ENCODE measurements at regions of chr7 and their contacts with region 1.

Region 1: GRCh38 chr7:109844362-109844761 is 1246.6 kb upstream of the LRRN3 start:
- DNase-seq: peak; percentile 35
- ATAC-seq: no peak
- H3K4me3 ChIP-seq: no peak overlapping the region
- H3K27ac ChIP-seq: no peak overlapping the region
- H3K4me1 ChIP-seq: no peaks in the 10 kb centered on the region
- H3K27me3 ChIP-seq: no peaks in the 10 kb centered on the region
- CTCF ChIP-seq: peak; percentile 56 to 62 (median 62); a peak in 5 of 6 replicates
- POLR2A ChIP-seq: no peak
- RAD21 ChIP-seq: peak; percentile 80

Region 2: GRCh38 chr7:108613112-108613759 is 1231.1 kb before region 1 on chr7:
- CTCF ChIA-PET with region 1: no interaction called
- POLR2A ChIA-PET with region 1: no interaction called
- RAD21 ChIA-PET with region 1: no interaction called
- intact Hi-C with region 1: loop called (anchors 5 kb)
- DNase-seq: peak; percentile 33
- ATAC-seq: peak; percentile 77
- H3K4me3 ChIP-seq: no peak overlapping the region
- H3K27ac ChIP-seq: no peak overlapping the region
- H3K4me1 ChIP-seq: no peaks in the 10 kb centered on the region
- H3K27me3 ChIP-seq: no peaks in the 10 kb centered on the region
- CTCF ChIP-seq: peak; percentile 49 to 78 (median 52)
- POLR2A ChIP-seq: no peak
- RAD21 ChIP-seq: peak; percentile 76

Region 3: DNA sequence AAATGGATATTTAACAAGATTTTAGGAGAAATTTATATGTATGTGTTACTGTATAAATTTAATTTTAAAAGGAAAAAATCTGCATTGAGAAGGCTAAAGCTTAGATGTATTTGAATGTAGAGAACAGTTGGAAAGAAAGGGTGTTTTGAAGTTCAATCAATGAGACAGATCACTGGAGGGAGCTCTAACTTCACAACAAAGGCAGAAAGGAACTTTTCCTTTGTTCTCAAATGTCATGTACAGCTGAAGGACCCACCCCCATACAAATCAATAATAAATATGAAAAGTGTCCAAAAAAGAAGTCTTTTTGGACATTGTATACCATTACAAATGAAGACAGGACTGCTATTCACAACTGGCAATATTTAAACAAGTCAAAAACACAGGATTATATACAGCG is 871.3 kb before region 1 on chr7:
- CTCF ChIA-PET with region 1: no interaction called
- POLR2A ChIA-PET with region 1: no interaction called
- RAD21 ChIA-PET with region 1: no interaction called
- intact Hi-C with region 1: loop called (anchors 5 kb)
- DNase-seq: peak; percentile 28
- ATAC-seq: peak; percentile 71
- H3K4me3 ChIP-seq: no peak overlapping the region
- H3K27ac ChIP-seq: no peak overlapping the region
- H3K4me1 ChIP-seq: no peaks in the 10 kb centered on the region
- H3K27me3 ChIP-seq: no peaks in the 10 kb centered on the region
- CTCF ChIP-seq: peak; percentile 30 to 38 (median 33); a peak in 5 of 6 replicates
- POLR2A ChIP-seq: no peak
- RAD21 ChIP-seq: peak; percentile 73

Region 4: DNA sequence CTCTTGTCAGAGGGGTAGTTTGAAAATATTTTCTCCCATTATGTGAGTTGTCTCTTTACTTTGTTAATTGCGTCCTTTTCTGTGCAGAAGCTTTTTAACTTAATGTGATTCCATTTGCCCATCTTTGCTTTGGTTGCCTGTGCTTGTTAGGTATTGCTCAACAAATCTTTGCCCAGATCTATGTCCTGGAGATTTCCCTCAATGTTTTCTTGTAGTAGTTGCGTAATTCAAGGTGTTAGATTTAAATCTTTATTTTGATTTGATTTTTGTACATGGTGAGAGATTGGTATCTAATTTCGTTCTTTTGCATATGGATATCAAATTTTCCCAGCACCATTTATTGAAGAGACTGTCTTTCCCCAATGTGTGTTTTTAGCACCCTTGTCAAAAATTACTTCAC is 707.5 kb before region 1 on chr7:
- CTCF ChIA-PET with region 1: no interaction called
- POLR2A ChIA-PET with region 1: no interaction called
- RAD21 ChIA-PET with region 1: no interaction called
- intact Hi-C with region 1: no loop called
- DNase-seq: no peak
- ATAC-seq: no peak
- H3K4me3 ChIP-seq: no peak overlapping the region
- H3K27ac ChIP-seq: no peak overlapping the region
- H3K4me1 ChIP-seq: no peaks in the 10 kb centered on the region
- H3K27me3 ChIP-seq: no peaks in the 10 kb centered on the region
- CTCF ChIP-seq: no peak
- POLR2A ChIP-seq: no peak
- RAD21 ChIP-seq: no peak

Region 5: DNA sequence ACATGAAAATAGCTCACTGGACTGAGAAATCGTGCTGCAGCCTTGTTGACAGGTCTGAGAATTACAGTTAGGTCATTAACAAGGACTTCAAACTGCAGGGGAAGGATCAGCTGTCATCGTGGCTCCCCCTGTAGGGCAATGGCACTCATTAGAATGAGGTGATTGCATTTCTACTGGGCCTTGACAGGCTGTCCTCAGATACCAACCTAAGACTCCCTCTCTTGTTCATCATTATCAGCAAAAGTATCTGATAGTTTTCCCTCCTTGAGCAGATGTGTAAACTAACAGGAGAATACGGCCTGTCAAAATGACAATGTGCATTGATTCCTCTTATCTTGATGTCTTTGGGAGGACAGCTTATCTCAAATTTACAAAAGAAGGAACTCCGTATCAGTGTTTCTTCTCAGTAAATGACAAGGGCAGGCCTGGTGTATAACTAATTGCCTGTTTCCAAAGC is 598.0 kb after region 1 on chr7:
- CTCF ChIA-PET with region 1: no interaction called
- POLR2A ChIA-PET with region 1: no interaction called
- RAD21 ChIA-PET with region 1: no interaction called
- intact Hi-C with region 1: loop called (anchors 1 kb)
- DNase-seq: peak; percentile 51
- ATAC-seq: peak; percentile 99
- H3K4me3 ChIP-seq: no peak overlapping the region
- H3K27ac ChIP-seq: no peak overlapping the region
- H3K4me1 ChIP-seq: no peaks in the 10 kb centered on the region
- H3K27me3 ChIP-seq: no peaks in the 10 kb centered on the region
- CTCF ChIP-seq: peak; percentile 43 to 81 (median 80); a peak in 5 of 6 replicates
- POLR2A ChIP-seq: no peak
- RAD21 ChIP-seq: peak; percentile 85

Region 6: DNA sequence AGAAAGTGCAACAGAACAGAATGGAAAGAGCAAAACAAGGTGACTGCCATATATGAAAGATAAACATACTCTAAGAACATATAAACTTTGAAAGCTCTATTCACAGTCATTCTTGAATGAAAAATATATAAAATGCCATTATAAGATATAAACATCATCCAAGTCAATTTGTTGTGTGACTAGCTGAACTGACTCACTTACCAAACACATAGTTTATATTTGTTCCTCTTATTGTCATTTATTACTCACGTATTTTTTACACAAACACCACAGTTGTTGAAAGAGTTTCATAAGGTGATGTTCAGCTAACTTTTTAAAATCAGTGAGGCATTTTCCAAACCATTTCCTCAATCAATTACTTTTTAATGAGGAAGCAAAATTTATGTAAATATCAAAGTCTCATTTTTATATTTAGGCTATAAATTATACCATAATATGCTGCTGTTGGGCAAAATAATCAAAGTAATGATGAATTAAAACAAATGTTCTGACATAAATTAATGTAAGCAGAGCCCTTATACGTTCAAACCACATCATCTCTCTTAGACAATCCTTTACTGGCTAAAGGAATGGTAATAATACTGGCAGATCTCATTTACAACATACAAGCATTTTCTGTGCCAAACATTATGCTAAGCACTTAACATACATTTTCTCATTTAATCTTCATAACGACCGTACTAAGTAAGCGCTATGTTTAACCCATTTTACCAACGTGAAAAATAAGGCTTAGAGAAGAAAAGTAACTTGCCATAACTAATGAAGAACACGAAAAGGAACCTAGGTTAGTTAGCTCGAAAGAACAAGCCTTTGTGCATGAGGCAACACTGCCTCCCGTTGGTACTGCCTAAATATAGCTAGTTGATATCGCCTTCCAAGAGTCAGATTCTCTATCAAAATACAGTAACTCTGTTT is 1253.9 kb after region 1 on chr7:
- CTCF ChIA-PET with region 1: no interaction called
- POLR2A ChIA-PET with region 1: no interaction called
- RAD21 ChIA-PET with region 1: no interaction called
- intact Hi-C with region 1: loop called (anchors 10 kb)
- DNase-seq: peak; percentile 18
- ATAC-seq: peak; percentile 55; the same call in 1 of the 2 replicates
- H3K4me3 ChIP-seq: no peak overlapping the region
- H3K27ac ChIP-seq: no peak overlapping the region
- H3K4me1 ChIP-seq: no peaks in the 10 kb centered on the region
- H3K27me3 ChIP-seq: no peaks in the 10 kb centered on the region
- CTCF ChIP-seq: peak in 2 of 3 experiments; percentile 59 to 62; a peak in 4 of 6 replicates
- POLR2A ChIP-seq: no peak
- RAD21 ChIP-seq: peak; percentile 53

Region 7: DNA sequence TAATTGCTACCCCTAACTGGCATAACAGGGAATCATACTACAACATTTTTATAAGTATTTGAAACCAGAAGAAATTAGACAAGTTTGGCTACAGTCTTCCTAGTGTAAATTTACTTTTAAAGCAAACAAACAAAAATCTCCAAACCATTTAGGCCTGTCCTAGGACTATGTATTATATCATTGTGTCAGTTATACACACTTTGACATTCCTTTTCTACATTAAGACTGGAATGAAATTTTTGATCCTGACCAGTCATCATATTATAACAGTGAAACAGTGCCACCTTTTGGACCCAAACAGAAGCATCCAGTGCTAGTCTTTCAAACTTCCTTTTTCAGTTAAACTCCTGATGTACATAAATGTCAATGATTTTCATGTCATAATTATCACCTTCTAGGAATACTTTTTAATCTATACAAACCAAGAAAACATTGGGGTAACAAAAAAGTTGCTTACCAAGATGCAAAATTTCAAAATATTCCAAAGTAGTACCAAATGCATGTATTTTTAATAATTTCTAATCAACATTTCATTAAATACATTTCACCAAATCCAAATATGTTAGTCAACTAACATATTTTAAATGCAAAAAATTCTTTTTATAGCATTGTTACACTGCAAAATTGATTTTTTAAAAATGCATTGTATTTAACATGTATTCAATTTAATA is 1642.2 kb after region 1 on chr7:
- CTCF ChIA-PET with region 1: no interaction called
- POLR2A ChIA-PET with region 1: no interaction called
- RAD21 ChIA-PET with region 1: no interaction called
- intact Hi-C with region 1: loop called (anchors 5 kb)
- DNase-seq: peak; percentile 29
- ATAC-seq: peak; percentile 70
- H3K4me3 ChIP-seq: no peak overlapping the region
- H3K27ac ChIP-seq: no peak overlapping the region
- H3K4me1 ChIP-seq: no peaks in the 10 kb centered on the region
- H3K27me3 ChIP-seq: no peaks in the 10 kb centered on the region
- CTCF ChIP-seq: peak; percentile 49 to 84 (median 63); a peak in 5 of 6 replicates
- POLR2A ChIP-seq: no peak
- RAD21 ChIP-seq: peak; percentile 78

Region 8: GRCh38 chr7:111730476-111731300 is 1886.3 kb after region 1 on chr7:
- CTCF ChIA-PET with region 1: no interaction called
- POLR2A ChIA-PET with region 1: no interaction called
- RAD21 ChIA-PET with region 1: no interaction called
- intact Hi-C with region 1: loop called (anchors 1 kb)
- DNase-seq: peak; percentile 39
- ATAC-seq: peak; percentile 92
- H3K4me3 ChIP-seq: no peak overlapping the region
- H3K27ac ChIP-seq: no peak overlapping the region
- H3K4me1 ChIP-seq: no peaks in the 10 kb centered on the region
- H3K27me3 ChIP-seq: no peaks in the 10 kb centered on the region
- CTCF ChIP-seq: peak; percentile 62 to 77 (median 69)
- POLR2A ChIP-seq: no peak
- RAD21 ChIP-seq: peak; percentile 88

Measured in HCT116 (cell line).